Activated CD4-positive, alpha-beta memory T cell treated with anti-CD3 and anti-CD28 coated beads for 36 hours (primary cell): ENCODE measurements at regions of chr20 and their contacts with region 1.

Region 1: GRCh38 chr20:45771182-45771759 is 20.4 kb downstream of the WFDC3 start:
- DNase-seq: peak; percentile 86
- H3K4me3 Mint-ChIP-seq: no peak overlapping the region
- H3K27ac Mint-ChIP-seq: no peak overlapping the region
- H3K4me1 Mint-ChIP-seq: peaks cover 5% of the 10 kb centered on the region
- H3K27me3 Mint-ChIP-seq: peaks cover 3% of the 10 kb centered on the region

Region 2: DNA sequence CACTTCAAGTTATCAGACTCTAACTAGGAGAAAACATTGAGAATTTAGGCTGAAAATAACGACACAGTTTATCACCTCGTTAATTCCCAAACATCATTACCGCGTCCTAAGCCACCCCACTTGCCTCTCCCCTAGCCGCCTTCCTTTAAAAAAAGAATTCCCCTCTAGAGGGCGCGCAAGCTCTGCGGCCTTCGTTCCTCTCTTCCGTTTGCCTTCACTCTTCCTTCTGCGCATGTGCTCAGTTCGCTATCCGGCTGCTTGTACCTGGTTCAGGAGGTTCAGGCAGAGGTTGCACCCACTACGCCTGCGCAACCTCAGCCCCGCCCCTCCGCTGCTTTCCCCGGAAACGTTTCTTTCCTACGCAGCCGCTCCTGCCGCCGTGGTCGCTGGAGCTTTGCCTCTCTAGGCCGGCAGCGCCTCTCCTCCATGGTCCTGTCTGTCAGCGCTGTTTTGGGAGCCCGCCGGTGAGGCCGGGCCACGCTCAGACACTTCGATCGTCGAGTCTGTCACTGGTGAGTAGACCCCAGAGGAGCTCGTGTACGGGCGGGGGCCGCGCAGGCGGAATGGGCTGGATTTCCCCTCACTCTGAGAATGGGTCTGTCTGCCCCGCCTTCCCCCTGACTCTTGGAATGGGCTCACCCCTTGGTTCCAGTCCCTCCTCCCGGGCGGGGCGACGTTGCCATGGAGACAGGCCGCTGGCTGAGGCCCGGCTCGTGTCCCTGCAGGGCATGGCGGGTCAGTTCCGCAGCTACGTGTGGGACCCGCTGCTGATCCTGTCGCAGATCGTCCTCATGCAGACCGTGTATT is 408.3 kb before region 1 on chr20 and contains the start of gene SYS1:
- CTCF ChIA-PET with region 1: interaction called, 21 read pairs
- POLR2A ChIA-PET with region 1: no interaction called
- intact Hi-C with region 1: no loop called
- DNase-seq: peak; percentile 99
- H3K4me3 Mint-ChIP-seq: peak within 1 kb of the TSS; percentile 96
- H3K27ac Mint-ChIP-seq: peak within 1 kb of the TSS; percentile 94
- H3K4me1 Mint-ChIP-seq: peaks cover 46% of the 10 kb centered on the region
- H3K27me3 Mint-ChIP-seq: no peaks in the 10 kb centered on the region
- total RNA-seq, gene SYS1: 19.9 to 24.8 TPM

Region 3: DNA sequence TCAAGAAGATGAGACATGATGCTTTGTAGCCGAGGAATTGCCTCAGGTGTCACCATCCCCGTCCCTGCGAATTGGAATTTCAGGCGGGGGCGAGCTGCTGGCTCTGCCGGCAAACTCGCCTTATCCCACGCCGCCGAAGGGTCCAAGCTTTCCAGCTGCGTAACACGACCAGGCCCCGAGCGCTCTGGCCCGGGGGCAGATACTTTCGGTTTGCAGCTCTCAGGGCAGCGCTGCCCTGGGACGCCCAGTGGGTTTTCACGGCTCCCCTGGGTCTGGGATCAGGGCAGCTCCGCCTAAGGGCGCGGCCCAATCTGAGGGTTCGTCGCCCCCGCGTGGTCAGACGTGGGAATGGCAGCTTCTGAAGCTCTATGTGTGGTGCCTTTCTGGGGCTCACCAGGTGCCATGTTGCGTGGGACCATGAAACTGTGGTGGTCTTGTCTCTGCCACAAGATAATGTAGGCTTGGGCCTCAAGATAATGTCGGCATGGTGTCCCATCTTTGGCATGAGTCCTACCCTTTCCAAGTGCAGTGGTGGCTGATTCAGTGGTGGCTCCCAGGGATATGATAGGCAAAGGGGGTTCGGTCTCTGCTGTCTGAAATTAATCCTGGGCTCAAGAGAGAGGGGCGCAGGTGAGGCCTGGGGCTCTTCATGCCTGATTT is 334.4 kb before region 1 on chr20:
- CTCF ChIA-PET with region 1: interaction called, 24 read pairs
- POLR2A ChIA-PET with region 1: no interaction called
- intact Hi-C with region 1: no loop called
- DNase-seq: peak; percentile 90
- H3K4me3 Mint-ChIP-seq: peak overlapping the region; percentile 73
- H3K27ac Mint-ChIP-seq: no peak overlapping the region
- H3K4me1 Mint-ChIP-seq: peaks cover 15% of the 10 kb centered on the region
- H3K27me3 Mint-ChIP-seq: no peaks in the 10 kb centered on the region

Region 4: DNA sequence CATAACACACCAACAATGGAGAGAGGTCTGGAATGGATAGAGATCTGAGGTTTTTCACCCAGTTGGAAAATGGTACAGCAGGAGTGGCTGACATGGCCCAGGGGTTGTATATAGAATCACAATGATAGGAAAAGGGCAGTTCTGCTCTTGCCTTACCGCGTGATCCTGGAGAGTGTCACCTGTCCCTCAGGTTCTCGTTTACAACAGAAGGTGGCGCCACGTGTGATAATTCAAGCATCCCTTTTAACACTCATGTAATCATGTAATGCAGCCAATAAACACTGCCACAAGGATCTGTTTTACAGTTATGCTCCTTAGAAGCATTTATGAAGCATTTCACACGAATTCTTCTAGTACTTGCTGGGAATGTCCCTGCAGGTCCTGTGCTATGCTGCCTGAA is 314.6 kb before region 1 on chr20:
- CTCF ChIA-PET with region 1: interaction called, 50 read pairs
- POLR2A ChIA-PET with region 1: no interaction called
- intact Hi-C with region 1: loop called (anchors 1 kb)
- DNase-seq: peak; percentile 64
- H3K4me3 Mint-ChIP-seq: no peak overlapping the region
- H3K27ac Mint-ChIP-seq: no peak overlapping the region
- H3K4me1 Mint-ChIP-seq: no peaks in the 10 kb centered on the region
- H3K27me3 Mint-ChIP-seq: no peaks in the 10 kb centered on the region

Region 5: GRCh38 chr20:45592574-45593189 is 178.6 kb before region 1 on chr20:
- CTCF ChIA-PET with region 1: interaction called, 80 read pairs
- POLR2A ChIA-PET with region 1: no interaction called
- intact Hi-C with region 1: loop called (anchors 1 kb)
- DNase-seq: peak; percentile 11
- H3K4me3 Mint-ChIP-seq: no peak overlapping the region
- H3K27ac Mint-ChIP-seq: no peak overlapping the region
- H3K4me1 Mint-ChIP-seq: no peaks in the 10 kb centered on the region
- H3K27me3 Mint-ChIP-seq: peaks cover 26% of the 10 kb centered on the region

Region 6: DNA sequence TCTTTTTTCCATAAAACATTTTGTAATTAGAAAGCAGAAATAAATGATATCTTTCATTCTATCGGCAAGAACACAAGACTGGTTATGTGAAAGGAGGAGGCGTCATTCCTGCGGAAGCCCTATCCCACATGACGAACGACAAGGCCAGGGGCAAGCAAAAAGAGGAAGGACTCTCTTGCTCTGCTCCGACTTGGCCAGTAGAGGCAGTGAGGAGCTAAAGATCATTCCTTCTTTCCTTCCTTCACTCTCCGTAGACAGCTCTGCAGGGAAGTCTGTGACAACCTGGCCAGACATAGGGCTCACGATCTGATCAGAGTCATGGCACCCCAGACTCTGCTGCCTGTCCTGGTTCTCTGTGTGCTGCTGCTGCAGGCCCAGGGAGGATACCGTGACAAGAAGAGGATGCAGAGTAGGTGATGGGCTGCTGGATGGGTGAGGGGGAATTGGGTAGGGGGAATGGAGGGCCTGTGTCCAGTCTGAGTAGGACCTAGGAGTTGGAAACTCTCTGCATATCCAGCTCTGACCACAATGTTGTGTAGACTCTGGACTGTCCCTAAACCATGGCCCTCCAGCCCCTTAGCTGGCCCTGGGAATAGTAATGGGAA is 141.7 kb before region 1 on chr20 and contains the start of gene WFDC10A:
- CTCF ChIA-PET with region 1: interaction called, 44 read pairs
- POLR2A ChIA-PET with region 1: no interaction called
- intact Hi-C with region 1: no loop called
- DNase-seq: peak; percentile 38
- H3K4me3 Mint-ChIP-seq: no peak within 1 kb of the TSS
- H3K27ac Mint-ChIP-seq: no peak within 1 kb of the TSS
- H3K4me1 Mint-ChIP-seq: peaks cover 2% of the 10 kb centered on the region
- H3K27me3 Mint-ChIP-seq: peaks cover 24% of the 10 kb centered on the region
- total RNA-seq, gene WFDC10A: not detected

Region 7: GRCh38 chr20:45672765-45673164 is 98.5 kb before region 1 on chr20:
- CTCF ChIA-PET with region 1: no interaction called
- POLR2A ChIA-PET with region 1: no interaction called
- intact Hi-C with region 1: no loop called
- DNase-seq: no peak
- H3K4me3 Mint-ChIP-seq: no peak overlapping the region
- H3K27ac Mint-ChIP-seq: no peak overlapping the region
- H3K4me1 Mint-ChIP-seq: no peaks in the 10 kb centered on the region
- H3K27me3 Mint-ChIP-seq: peaks cover 20% of the 10 kb centered on the region

Region 8: GRCh38 chr20:45792332-45792686 is 21.0 kb after region 1 on chr20:
- CTCF ChIA-PET with region 1: interaction called, 18 read pairs
- POLR2A ChIA-PET with region 1: no interaction called
- intact Hi-C with region 1: no loop called
- DNase-seq: peak; percentile 20
- H3K4me3 Mint-ChIP-seq: peak overlapping the region; percentile 86
- H3K27ac Mint-ChIP-seq: peak overlapping the region; percentile 81
- H3K4me1 Mint-ChIP-seq: peaks cover 15% of the 10 kb centered on the region
- H3K27me3 Mint-ChIP-seq: no peaks in the 10 kb centered on the region

Region 9: DNA sequence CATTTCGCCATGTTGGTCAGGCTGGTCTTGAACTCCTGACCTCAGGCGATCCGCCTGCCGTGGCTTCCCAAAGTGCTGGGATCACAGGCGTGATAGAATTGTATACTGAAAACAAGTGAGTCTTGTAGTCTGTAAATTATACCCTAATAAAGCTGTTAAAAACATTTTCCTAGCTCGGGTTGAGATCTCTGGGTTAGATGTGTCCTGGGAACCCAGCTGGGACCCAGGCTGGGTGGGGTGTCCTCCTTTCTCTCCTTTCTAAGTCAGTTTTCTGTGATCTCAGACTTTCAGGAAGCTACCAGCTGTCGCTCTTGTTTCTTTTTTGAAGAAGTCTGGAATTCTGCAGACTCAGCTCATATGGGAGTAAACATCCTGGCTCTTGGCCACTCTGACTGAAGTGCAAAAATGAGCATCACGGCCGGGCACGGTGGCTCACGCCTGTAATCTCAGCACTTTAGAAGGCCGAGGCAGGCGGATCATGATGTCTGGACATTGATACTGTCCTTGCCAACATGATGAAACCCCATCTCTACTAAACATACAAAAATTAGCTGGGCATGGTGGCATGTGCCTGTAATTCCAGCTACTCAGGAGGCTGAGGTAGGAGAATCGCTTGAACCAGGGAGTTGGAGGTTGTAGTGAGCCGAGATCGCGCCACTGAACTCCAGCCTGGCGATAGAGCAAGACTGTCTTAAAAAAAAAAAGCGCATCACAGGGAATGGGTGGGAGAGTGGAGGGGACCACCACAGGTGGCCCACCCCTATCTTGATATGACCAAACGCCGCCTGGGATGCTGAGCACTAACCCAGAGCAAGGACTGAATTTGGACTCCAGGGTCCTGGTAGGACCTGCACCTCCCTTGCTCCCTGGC is 153.4 kb after region 1 on chr20:
- CTCF ChIA-PET with region 1: no interaction called
- POLR2A ChIA-PET with region 1: no interaction called
- intact Hi-C with region 1: no loop called
- DNase-seq: no peak
- H3K4me3 Mint-ChIP-seq: no peak overlapping the region
- H3K27ac Mint-ChIP-seq: no peak overlapping the region
- H3K4me1 Mint-ChIP-seq: peaks cover 3% of the 10 kb centered on the region
- H3K27me3 Mint-ChIP-seq: peaks cover 10% of the 10 kb centered on the region

Region 10: GRCh38 chr20:45963059-45964005 is 192.1 kb after region 1 on chr20:
- CTCF ChIA-PET with region 1: no interaction called
- POLR2A ChIA-PET with region 1: no interaction called
- intact Hi-C with region 1: no loop called
- DNase-seq: no peak
- H3K4me3 Mint-ChIP-seq: no peak overlapping the region
- H3K27ac Mint-ChIP-seq: no peak overlapping the region
- H3K4me1 Mint-ChIP-seq: peaks cover 8% of the 10 kb centered on the region
- H3K27me3 Mint-ChIP-seq: no peaks in the 10 kb centered on the region